ENCODE measurements at regions of chr10 and their contacts with region 1.

Region 1: DNA sequence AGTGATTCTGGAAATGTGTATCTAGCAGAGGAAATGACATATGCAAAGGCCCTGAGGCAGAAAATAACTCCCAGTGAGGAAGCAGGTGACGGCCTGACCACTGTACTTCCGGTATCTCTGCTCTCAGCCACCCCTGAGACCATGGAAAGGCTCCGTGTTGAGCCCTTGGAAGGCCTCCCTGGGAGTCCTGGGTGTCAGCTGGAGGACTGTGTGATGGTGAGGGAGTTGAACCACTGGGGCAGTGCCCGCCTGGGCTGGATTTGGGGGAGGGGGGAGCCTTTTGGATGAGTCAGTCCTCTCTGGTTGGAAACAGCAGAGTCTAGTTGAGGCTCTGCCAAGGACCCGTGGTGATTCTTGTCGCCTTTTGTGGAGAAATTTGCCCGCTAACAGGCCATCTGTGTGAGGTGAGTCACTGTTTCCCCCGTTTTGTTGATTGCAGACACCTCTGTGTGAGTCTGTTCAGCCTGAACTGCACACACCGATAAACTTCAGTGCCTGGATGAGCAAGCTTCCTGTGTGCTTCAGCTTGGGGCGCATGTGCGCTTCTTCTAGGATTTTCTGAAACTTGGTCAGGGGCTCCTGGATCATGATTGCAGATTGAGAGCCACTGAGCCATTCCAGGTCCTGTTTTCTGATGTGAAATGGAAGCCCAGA is 98.6 kb downstream of the GRK5 start:
- DNase-seq: peak; percentile 97
- H3K4me3 Mint-ChIP-seq: peak overlapping the region; percentile 68
- H3K27ac Mint-ChIP-seq: peak overlapping the region; percentile 99
- H3K4me1 Mint-ChIP-seq: peaks cover 74% of the 10 kb centered on the region
- H3K27me3 Mint-ChIP-seq: no peaks in the 10 kb centered on the region

Region 2: DNA sequence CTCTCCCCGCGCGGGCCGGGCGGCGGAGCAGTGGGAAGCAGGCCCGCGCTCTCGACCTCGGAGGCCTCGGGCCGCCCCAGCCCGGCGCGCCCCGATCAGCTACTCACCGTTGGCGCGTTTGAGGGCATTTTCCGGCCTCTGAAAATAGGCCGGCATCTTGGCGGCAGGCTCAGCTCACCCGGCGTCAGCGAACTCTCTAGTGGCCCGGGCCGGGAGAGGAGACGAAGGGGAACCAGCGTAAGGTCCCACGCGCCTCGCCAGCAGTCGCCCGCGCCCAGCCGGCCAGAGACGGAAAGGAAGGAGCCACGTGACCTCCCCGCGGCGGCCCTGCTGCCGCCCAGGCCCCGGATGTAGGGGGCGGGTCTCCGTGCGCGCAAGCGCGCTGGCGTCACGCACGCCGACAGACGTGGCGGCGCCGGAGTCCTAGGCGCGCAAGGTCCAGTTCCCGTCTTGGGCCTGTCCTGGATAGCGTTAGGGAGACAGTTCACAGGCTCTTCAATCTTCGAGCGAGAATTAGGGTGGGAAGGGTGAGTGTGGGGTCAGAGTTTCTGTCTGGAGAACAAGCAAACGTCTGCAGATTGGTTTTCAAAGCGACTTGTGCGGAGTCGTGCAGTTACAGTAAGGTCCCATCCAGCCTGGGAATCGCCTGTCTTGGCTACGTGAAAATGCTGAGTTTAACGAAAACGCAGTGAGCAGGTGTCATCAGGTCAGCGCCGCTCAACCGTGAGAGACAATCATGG is 225.3 kb before region 1 on chr10 and contains the start of gene EIF3A:
- CTCF ChIA-PET with region 1: no interaction called
- intact Hi-C with region 1: loop called (anchors 2 kb)
- DNase-seq: peak; percentile 90
- H3K4me3 Mint-ChIP-seq: peak within 1 kb of the TSS; percentile 95
- H3K27ac Mint-ChIP-seq: peak within 1 kb of the TSS; percentile 98
- H3K4me1 Mint-ChIP-seq: peaks cover 33% of the 10 kb centered on the region
- H3K27me3 Mint-ChIP-seq: no peaks in the 10 kb centered on the region
- total RNA-seq, gene EIF3A: 113 to 120 TPM

Region 3: DNA sequence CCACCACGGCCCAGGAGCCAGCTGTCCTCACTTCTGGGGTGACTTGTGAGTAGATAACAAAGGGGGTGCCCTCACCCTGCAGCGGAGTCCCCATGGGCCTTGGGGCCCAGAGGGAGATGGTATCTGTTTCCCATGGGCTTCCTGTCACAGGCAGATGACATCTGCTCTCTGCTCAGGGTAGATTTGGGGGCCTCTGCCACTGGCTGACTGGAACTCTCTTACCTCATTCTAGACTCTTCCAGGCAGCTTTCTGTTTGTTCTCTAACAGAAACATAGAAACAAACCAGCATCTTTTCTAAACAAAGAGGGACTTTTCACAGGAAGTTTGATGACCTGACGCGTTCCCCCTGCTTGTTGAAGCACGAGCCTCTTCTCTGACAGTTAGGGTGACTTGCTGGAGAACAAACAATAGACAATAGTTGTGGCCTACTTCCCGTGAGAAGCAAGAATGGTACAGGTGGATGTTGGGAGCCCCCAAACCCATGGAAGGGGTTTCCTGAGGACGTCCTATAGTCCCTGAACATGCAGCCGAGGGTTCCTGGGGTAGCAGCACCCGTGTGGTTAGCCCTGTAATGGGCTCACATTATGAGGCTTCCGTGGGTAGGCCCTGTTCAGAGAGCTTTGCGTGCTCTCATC is 37.0 kb before region 1 on chr10:
- CTCF ChIA-PET with region 1: interaction called, 4 read pairs
- intact Hi-C with region 1: loop called (anchors 1 kb)
- DNase-seq: peak; percentile 89
- H3K4me3 Mint-ChIP-seq: peak overlapping the region; percentile 39
- H3K27ac Mint-ChIP-seq: peak overlapping the region; percentile 93
- H3K4me1 Mint-ChIP-seq: peaks cover 52% of the 10 kb centered on the region
- H3K27me3 Mint-ChIP-seq: no peaks in the 10 kb centered on the region

Region 4: DNA sequence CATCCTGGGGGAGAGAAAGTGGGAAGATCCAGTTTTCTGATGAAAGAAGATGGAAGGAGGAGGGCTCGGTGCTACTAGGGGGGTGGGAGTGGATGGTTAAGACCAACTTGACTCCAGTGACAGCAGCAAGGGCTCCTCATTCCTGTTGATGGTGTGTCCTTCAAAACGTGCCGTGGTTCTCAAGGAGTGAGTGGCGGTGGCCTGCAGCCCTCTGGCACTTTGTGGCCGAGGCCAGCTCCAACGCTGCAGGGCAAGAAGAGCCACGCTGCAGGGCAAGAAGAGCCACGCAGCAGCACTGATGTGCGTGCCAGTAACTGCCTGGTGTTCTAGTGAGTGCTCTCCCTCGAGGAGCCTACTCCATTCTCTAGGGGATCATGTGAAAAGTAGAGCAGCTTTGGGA is 26.5 kb before region 1 on chr10:
- CTCF ChIA-PET with region 1: no interaction called
- intact Hi-C with region 1: no loop called
- DNase-seq: no peak
- H3K4me3 Mint-ChIP-seq: no peak overlapping the region
- H3K27ac Mint-ChIP-seq: no peak overlapping the region
- H3K4me1 Mint-ChIP-seq: peaks cover 45% of the 10 kb centered on the region
- H3K27me3 Mint-ChIP-seq: no peaks in the 10 kb centered on the region

Region 5: GRCh38 chr10:119383174-119383856 is 77.3 kb after region 1 on chr10:
- CTCF ChIA-PET with region 1: no interaction called
- intact Hi-C with region 1: no loop called
- DNase-seq: no peak
- H3K4me3 Mint-ChIP-seq: no peak overlapping the region
- H3K27ac Mint-ChIP-seq: no peak overlapping the region
- H3K4me1 Mint-ChIP-seq: peaks cover 4% of the 10 kb centered on the region
- H3K27me3 Mint-ChIP-seq: no peaks in the 10 kb centered on the region

Region 6: DNA sequence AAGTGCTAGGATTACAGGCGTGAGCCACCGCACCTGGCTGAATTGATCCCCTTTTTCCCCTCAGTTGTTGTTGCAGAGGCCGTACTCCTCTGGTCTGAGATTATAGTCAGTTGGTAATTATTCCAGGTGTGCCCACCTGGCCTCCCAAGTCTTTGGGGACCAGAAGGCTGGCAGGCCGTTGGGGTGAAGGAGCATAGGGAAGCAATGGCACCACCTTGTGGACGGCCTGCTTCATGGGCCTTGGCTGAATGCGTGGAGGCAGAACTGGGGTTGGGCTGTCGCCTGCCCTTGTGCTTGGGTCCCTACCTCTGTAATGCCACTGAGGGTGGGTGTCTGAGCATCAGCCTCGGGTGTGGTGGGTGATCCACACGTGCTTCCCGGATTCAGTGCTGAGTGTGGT is 110.9 kb after region 1 on chr10:
- CTCF ChIA-PET with region 1: interaction called, 3 read pairs
- intact Hi-C with region 1: loop called (anchors 1 kb)
- DNase-seq: peak; percentile 85
- H3K4me3 Mint-ChIP-seq: no peak overlapping the region
- H3K27ac Mint-ChIP-seq: no peak overlapping the region
- H3K4me1 Mint-ChIP-seq: peaks cover 1% of the 10 kb centered on the region
- H3K27me3 Mint-ChIP-seq: no peaks in the 10 kb centered on the region

Region 7: GRCh38 chr10:119517235-119518141 is 211.5 kb after region 1 on chr10:
- CTCF ChIA-PET with region 1: no interaction called
- intact Hi-C with region 1: loop called (anchors 2 kb)
- DNase-seq: peak; percentile 83
- H3K4me3 Mint-ChIP-seq: peak overlapping the region; percentile 43
- H3K27ac Mint-ChIP-seq: peak overlapping the region; percentile 90
- H3K4me1 Mint-ChIP-seq: peaks cover 70% of the 10 kb centered on the region
- H3K27me3 Mint-ChIP-seq: no peaks in the 10 kb centered on the region

Region 8: DNA sequence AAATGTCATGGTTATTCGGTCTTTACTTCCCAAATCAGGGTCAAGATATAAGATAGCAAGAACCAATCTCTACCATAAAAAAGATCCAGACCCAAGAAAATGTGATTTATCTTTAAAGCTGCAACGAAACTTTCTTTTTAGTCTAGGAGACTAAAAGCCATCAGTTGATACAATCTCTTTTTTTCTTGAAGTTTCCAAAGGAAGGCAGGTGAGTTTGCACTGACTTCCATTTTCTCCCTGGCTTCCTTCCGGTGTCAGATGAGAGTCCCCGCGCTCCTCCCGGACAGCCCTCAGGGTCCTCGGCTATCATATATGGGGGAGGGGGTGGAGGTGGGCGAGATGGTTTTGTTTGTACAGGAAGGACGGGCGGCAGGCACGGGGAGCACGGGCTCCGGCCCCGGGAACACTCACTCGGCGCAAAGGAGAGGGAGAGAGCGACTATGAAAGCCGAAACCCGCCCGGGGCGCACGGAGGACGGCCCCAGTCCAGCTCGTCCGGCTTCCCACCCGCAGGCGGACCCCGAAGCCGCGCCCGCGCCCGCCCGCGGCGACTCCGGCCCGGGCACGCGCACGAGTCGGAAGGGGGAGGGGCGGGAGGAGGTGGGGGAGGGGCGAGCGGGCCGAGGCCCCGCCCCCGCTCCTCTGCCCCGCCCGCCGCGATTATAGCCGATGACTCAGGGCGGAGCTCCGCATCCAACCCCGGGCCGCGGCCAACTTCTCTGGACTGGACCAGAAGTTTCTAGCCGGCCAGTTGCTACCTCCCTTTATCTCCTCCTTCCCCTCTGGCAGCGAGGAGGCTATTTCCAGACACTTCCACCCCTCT is 344.9 kb after region 1 on chr10 and contains the start of gene BAG3:
- CTCF ChIA-PET with region 1: no interaction called
- intact Hi-C with region 1: loop called (anchors 2 kb)
- DNase-seq: peak; percentile 82
- H3K4me3 Mint-ChIP-seq: peak within 1 kb of the TSS; percentile 97
- H3K27ac Mint-ChIP-seq: peak within 1 kb of the TSS; percentile 95
- H3K4me1 Mint-ChIP-seq: peaks cover 38% of the 10 kb centered on the region
- H3K27me3 Mint-ChIP-seq: no peaks in the 10 kb centered on the region
- total RNA-seq, gene BAG3: 20.9 to 24.3 TPM

Region 9: GRCh38 chr10:119770928-119771327 is 464.9 kb after region 1 on chr10:
- CTCF ChIA-PET with region 1: no interaction called
- intact Hi-C with region 1: no loop called
- DNase-seq: no peak
- H3K4me3 Mint-ChIP-seq: no peak overlapping the region
- H3K27ac Mint-ChIP-seq: no peak overlapping the region
- H3K4me1 Mint-ChIP-seq: peaks cover 24% of the 10 kb centered on the region
- H3K27me3 Mint-ChIP-seq: no peaks in the 10 kb centered on the region

Measured in activated naive CD4-positive, alpha-beta T cell treated with anti-CD3 and anti-CD28 coated beads for 36 hours (primary cell).